Activated CD8-positive, alpha-beta T cell treated with anti-CD3 and anti-CD28 coated beads for 36 hours (primary cell): ENCODE measurements at regions of chr15 and their contacts with region 1.

Region 1: GRCh38 chr15:52139599-52140491 is 27.3 kb upstream of the BCL2L10 start:
- DNase-seq: peak; percentile 85
- ATAC-seq: peak; percentile 69
- H3K4me3 Mint-ChIP-seq: no peak overlapping the region
- H3K27ac Mint-ChIP-seq: no peak overlapping the region
- H3K4me1 Mint-ChIP-seq: peaks cover 18% of the 10 kb centered on the region
- H3K27me3 Mint-ChIP-seq: no peaks in the 10 kb centered on the region
- CTCF ChIP-seq: peak; percentile 87

Region 2: DNA sequence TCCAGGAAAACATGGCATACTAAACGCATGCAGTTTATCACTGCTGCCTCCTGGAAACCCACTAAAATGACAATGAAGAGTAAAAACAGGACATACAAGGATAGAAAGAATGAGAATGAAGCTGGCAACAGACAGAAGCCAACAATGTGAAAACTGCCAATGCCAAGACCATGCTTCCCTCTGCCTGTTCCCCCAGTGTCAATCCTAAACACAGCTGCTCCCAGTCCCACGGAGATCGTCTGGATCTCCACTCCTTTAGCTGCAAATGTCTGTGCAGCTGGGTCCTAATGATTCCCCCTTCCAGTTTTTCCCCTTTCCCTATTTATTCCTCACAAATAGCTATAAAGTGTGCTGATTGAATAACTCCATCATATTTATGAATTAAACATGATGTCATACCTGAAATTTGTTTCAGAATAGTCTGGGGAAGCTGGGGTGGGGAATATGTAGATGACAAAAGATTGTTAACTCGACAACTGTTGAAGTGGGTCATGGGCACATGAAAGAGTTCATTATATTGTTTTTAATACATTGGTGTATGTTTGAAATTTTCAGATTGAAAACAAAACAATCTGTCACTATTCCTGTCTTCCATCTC is 184.2 kb before region 1 on chr15:
- CTCF ChIA-PET with region 1: no interaction called
- POLR2A ChIA-PET with region 1: no interaction called
- intact Hi-C with region 1: no loop called
- DNase-seq: no peak
- ATAC-seq: no peak
- H3K4me3 Mint-ChIP-seq: no peak overlapping the region
- H3K27ac Mint-ChIP-seq: no peak overlapping the region
- H3K4me1 Mint-ChIP-seq: peaks cover 6% of the 10 kb centered on the region
- H3K27me3 Mint-ChIP-seq: no peaks in the 10 kb centered on the region
- CTCF ChIP-seq: no peak

Region 3: GRCh38 chr15:51982013-51982769 is 157.7 kb before region 1 on chr15:
- CTCF ChIA-PET with region 1: interaction called, 6 read pairs
- POLR2A ChIA-PET with region 1: no interaction called
- intact Hi-C with region 1: loop called (anchors 5 kb)
- DNase-seq: peak; percentile 76
- ATAC-seq: peak; percentile 95
- H3K4me3 Mint-ChIP-seq: peak overlapping the region; percentile 70
- H3K27ac Mint-ChIP-seq: peak overlapping the region; percentile 86
- H3K4me1 Mint-ChIP-seq: peaks cover 14% of the 10 kb centered on the region
- H3K27me3 Mint-ChIP-seq: no peaks in the 10 kb centered on the region
- CTCF ChIP-seq: peak; percentile 93

Region 4: GRCh38 chr15:52068004-52068615 is 71.7 kb before region 1 on chr15:
- CTCF ChIA-PET with region 1: no interaction called
- POLR2A ChIA-PET with region 1: no interaction called
- intact Hi-C with region 1: no loop called
- DNase-seq: no peak
- ATAC-seq: no peak
- H3K4me3 Mint-ChIP-seq: no peak overlapping the region
- H3K27ac Mint-ChIP-seq: no peak overlapping the region
- H3K4me1 Mint-ChIP-seq: peaks cover 15% of the 10 kb centered on the region
- H3K27me3 Mint-ChIP-seq: no peaks in the 10 kb centered on the region
- CTCF ChIP-seq: no peak

Region 5: GRCh38 chr15:52128568-52128967 is 11.3 kb before region 1 on chr15:
- CTCF ChIA-PET with region 1: interaction called, 12 read pairs
- POLR2A ChIA-PET with region 1: interaction called, 3 read pairs
- intact Hi-C with region 1: no loop called
- DNase-seq: no peak
- ATAC-seq: no peak
- H3K4me3 Mint-ChIP-seq: no peak overlapping the region
- H3K27ac Mint-ChIP-seq: no peak overlapping the region
- H3K4me1 Mint-ChIP-seq: no peaks in the 10 kb centered on the region
- H3K27me3 Mint-ChIP-seq: no peaks in the 10 kb centered on the region
- CTCF ChIP-seq: no peak

Region 6: DNA sequence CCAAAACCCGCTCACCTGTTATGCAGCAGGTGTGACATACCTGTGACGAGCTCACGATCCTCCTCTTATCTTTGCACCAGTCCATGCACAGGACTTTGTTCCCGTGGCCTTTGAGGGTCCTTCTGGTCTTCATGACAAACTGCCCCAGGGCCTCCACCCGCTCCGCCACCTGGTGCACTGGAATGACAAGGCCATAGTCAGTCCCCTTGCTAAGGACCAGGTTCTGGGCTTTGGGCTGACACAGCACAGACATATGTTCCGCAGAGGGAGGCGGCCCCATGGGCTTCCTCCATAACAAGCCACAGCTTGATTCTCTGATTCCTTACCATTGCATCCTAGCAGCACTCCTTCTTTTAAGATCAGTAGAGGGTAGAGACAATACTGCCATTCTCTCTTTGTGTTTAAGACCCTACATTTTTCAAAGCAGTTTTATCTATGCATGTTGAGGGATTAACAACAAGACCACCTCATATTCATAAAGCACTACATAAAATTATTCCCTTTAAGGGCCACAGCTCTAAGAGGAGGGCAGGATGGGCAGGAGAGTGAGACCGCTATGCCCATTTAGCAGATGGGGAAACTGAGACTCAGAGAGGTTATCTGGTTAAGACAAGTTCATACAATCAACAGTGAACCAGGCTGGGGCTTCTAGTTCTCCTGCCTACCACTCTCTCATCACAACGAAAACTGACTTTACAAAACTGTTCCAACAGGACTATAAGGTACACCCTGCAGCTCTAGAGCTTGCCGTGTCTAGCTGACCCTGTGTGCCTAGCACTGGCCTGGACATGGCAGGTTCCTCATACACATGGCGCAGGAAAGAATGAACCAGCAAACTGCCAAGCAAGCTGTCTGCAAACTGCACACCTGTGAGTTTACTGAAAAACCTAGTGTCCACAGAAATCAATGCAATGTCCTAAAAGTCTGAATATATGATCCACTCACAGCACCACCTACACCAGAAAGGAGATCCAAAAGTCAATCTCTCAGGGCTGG is 14.4 kb after region 1 on chr15:
- CTCF ChIA-PET with region 1: interaction called, 11 read pairs
- POLR2A ChIA-PET with region 1: no interaction called
- intact Hi-C with region 1: no loop called
- DNase-seq: no peak
- ATAC-seq: no peak
- H3K4me3 Mint-ChIP-seq: no peak overlapping the region
- H3K27ac Mint-ChIP-seq: no peak overlapping the region
- H3K4me1 Mint-ChIP-seq: no peaks in the 10 kb centered on the region
- H3K27me3 Mint-ChIP-seq: no peaks in the 10 kb centered on the region
- CTCF ChIP-seq: no peak